Activated CD4-positive, alpha-beta memory T cell treated with anti-CD3 and anti-CD28 coated beads for 36 hours (primary cell): ENCODE measurements at regions of chr10 and their contacts with region 1.

Region 1: DNA sequence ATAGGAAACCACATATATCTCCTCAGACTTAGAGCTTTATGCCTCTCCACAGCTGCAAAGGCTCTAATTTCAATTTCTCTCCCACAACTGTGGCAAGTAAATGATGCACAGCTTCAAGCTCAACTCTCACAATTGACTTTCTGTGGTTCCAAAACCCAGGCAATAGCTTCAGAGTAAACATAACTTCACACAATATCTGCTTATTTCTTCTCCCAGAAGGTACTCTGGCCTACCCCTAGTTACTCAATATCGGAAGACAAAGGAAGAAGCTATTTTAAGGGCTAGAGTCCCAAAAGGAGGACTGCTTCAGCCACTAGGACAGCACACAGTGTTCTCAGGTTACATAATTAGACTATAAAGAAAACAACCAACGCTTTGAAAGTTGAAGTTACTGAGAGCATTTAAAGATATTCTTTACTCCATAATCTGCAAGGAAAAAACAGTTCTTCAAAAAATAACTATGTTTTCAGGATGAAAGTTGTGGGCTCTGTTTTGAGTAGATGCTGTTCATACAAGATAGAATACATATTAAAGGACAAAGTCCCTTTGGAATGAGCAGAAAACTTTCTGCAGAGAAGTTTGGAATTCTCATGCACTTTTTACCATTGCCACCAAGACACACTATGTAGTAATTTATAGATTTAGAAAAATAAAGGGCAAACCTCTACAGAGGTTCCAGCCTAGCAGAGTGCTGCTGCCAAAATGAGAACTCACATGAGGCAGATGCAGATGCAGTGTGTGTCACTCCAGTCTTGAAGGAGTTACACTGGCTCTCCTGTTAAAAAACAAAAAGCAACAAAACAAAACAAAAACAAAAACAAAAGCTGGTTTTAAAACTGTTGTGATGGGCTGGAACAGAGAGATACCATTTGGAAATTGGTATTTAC is 81.8 kb downstream of the NT5C2 start:
- DNase-seq: no peak
- H3K4me3 Mint-ChIP-seq: no peak overlapping the region
- H3K27ac Mint-ChIP-seq: peak overlapping the region; percentile 60
- H3K4me1 Mint-ChIP-seq: peaks cover 21% of the 10 kb centered on the region
- H3K27me3 Mint-ChIP-seq: no peaks in the 10 kb centered on the region

Region 2: DNA sequence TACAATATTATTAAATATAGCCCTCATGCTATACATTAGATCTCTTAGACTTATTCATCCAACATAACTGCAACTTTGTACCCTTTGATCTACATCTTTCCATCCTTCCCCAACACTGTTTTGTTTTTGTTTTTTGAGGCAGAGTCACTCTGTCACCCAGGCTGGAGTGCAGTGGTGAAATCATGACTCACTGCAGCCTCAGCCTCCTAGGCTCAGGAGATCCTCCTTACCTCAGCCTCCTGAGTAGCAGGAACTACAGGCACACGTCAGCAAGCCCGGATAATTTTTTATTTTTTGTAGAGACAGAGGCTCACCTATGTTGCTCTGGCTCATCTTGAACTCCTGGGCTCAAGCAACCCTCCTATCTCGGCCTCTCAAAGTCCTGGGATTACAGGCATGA is 28.5 kb after region 1 on chr10:
- CTCF ChIA-PET with region 1: no interaction called
- POLR2A ChIA-PET with region 1: no interaction called
- intact Hi-C with region 1: loop called (anchors 2 kb)
- DNase-seq: no peak
- H3K4me3 Mint-ChIP-seq: no peak overlapping the region
- H3K27ac Mint-ChIP-seq: no peak overlapping the region
- H3K4me1 Mint-ChIP-seq: peaks cover 17% of the 10 kb centered on the region
- H3K27me3 Mint-ChIP-seq: no peaks in the 10 kb centered on the region

Region 3: DNA sequence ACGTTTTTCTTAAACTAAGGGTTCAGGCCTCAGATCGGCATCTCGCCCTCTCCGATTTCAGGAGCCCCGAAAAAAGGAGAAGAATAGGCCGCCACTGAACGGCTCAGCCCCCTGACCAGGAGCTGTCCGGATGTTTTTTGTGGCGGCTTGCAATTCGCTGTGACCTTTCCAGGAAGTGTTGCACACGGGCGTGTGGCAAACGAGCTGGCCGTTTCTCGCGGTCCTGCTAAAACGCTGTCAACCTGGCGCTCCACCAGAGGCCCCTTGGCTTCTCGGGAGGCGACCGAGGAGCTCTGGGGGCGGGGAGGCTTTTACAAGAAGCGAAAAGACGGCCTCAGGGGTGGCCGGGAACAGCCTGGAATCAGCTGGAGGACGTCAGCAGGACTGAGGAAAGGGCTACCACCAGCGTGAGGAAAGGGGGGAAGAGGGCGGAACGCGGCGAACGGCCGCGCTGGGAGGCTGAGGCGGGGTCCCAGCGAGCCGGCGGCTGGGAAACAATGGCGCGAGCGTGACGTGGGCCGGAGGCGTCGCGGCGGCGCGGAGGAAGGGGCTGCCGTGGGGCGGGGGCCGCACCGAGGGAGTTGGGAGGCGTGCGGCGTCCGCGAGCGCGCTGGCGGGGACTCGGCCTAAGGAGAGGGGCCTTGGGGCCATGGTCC is 81.3 kb after region 1 on chr10:
- CTCF ChIA-PET with region 1: no interaction called
- POLR2A ChIA-PET with region 1: interaction called, 3 read pairs
- intact Hi-C with region 1: loop called (anchors 1 kb)
- DNase-seq: peak; percentile 81
- H3K4me3 Mint-ChIP-seq: peak overlapping the region; percentile 92
- H3K27ac Mint-ChIP-seq: peak overlapping the region; percentile 92
- H3K4me1 Mint-ChIP-seq: peaks cover 43% of the 10 kb centered on the region
- H3K27me3 Mint-ChIP-seq: no peaks in the 10 kb centered on the region

Region 4: DNA sequence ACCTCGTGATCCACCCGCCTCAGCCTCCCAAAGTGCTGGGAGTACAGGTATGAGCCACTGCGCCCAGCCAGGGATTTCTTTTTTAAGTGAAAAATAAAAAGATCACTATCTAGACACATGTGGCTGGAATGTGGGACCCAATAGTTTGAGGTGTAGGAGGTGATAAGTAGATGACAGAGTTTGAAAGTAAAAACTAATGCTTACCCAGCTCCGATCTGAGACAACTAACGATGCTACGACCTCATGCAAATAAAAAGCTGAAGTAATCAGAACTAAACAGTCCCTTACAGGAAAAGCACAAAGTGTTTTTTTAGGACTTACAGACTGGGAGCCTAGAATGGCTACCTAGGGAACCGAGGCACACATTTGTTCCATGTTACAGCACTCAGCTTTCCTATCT is 216.6 kb after region 1 on chr10:
- CTCF ChIA-PET with region 1: no interaction called
- POLR2A ChIA-PET with region 1: no interaction called
- intact Hi-C with region 1: no loop called
- DNase-seq: no peak
- H3K4me3 Mint-ChIP-seq: no peak overlapping the region
- H3K27ac Mint-ChIP-seq: peak overlapping the region; percentile 57
- H3K4me1 Mint-ChIP-seq: peaks cover 5% of the 10 kb centered on the region
- H3K27me3 Mint-ChIP-seq: no peaks in the 10 kb centered on the region